Mammary epithelial cell (primary cell): ENCODE measurements at regions of chr12 and their contacts with region 1.

Region 1: GRCh38 chr12:42961395-42961794 is 371.8 kb upstream of the PRICKLE1 start:
- DNase-seq: peak; percentile 95
- H3K4me3 ChIP-seq: no peak overlapping the region
- H3K27ac ChIP-seq: peak overlapping the region; percentile 93
- H3K4me1 ChIP-seq: peaks cover 55% of the 10 kb centered on the region
- H3K27me3 ChIP-seq: no peaks in the 10 kb centered on the region
- CTCF ChIP-seq: no peak

Region 2: GRCh38 chr12:42474391-42474790 is 487.0 kb before region 1 on chr12:
- CTCF ChIA-PET with region 1: no interaction called
- dilution Hi-C with region 1: no loop called
- in situ Hi-C with region 1: no loop called
- intact Hi-C with region 1: loop called (anchors 2 kb)
- DNase-seq: peak; percentile 95
- H3K4me3 ChIP-seq: no peak overlapping the region
- H3K27ac ChIP-seq: peak overlapping the region; percentile 68
- H3K4me1 ChIP-seq: peaks cover 35% of the 10 kb centered on the region
- H3K27me3 ChIP-seq: no peaks in the 10 kb centered on the region
- CTCF ChIP-seq: no peak

Region 3: GRCh38 chr12:42705863-42706262 is 255.5 kb before region 1 on chr12:
- CTCF ChIA-PET with region 1: no interaction called
- dilution Hi-C with region 1: no loop called
- in situ Hi-C with region 1: no loop called
- intact Hi-C with region 1: loop called (anchors 10 kb)
- DNase-seq: peak; percentile 76
- H3K4me3 ChIP-seq: no peak overlapping the region
- H3K27ac ChIP-seq: peak overlapping the region; percentile 43
- H3K4me1 ChIP-seq: peaks cover 29% of the 10 kb centered on the region
- H3K27me3 ChIP-seq: no peaks in the 10 kb centered on the region
- CTCF ChIP-seq: no peak

Region 4: GRCh38 chr12:42936991-42937390 is 24.4 kb before region 1 on chr12:
- CTCF ChIA-PET with region 1: no interaction called
- dilution Hi-C with region 1: no loop called
- in situ Hi-C with region 1: no loop called
- intact Hi-C with region 1: no loop called
- DNase-seq: no peak
- H3K4me3 ChIP-seq: no peak overlapping the region
- H3K27ac ChIP-seq: no peak overlapping the region
- H3K4me1 ChIP-seq: peaks cover 11% of the 10 kb centered on the region
- H3K27me3 ChIP-seq: no peaks in the 10 kb centered on the region
- CTCF ChIP-seq: no peak

Region 5: DNA sequence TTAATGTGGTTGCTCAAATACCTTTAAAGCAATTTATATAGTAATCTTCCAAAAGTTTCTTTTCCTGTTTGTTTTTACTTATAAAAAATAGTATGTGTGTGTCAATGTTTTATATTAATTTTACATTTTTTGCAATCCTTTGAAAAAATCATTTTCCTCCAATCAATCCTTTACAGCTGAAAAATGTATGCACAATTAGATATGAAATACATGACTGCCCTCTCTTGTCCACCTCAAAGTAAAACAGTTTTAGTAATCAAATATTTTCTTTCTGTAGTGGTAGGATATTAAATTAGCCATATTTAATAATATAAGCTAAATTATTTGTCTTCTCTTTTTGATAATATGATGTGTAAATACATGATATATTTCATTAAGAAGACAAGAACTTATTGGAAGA is 320.7 kb after region 1 on chr12:
- CTCF ChIA-PET with region 1: no interaction called
- dilution Hi-C with region 1: no loop called
- in situ Hi-C with region 1: no loop called
- intact Hi-C with region 1: loop called (anchors 10 kb)
- DNase-seq: no peak
- H3K4me3 ChIP-seq: no peak overlapping the region
- H3K27ac ChIP-seq: no peak overlapping the region
- H3K4me1 ChIP-seq: peaks cover 35% of the 10 kb centered on the region
- H3K27me3 ChIP-seq: no peaks in the 10 kb centered on the region
- CTCF ChIP-seq: peak; percentile 36 to 48